ENCODE measurements at regions of chr4 and their contacts with region 1.

Region 1: DNA sequence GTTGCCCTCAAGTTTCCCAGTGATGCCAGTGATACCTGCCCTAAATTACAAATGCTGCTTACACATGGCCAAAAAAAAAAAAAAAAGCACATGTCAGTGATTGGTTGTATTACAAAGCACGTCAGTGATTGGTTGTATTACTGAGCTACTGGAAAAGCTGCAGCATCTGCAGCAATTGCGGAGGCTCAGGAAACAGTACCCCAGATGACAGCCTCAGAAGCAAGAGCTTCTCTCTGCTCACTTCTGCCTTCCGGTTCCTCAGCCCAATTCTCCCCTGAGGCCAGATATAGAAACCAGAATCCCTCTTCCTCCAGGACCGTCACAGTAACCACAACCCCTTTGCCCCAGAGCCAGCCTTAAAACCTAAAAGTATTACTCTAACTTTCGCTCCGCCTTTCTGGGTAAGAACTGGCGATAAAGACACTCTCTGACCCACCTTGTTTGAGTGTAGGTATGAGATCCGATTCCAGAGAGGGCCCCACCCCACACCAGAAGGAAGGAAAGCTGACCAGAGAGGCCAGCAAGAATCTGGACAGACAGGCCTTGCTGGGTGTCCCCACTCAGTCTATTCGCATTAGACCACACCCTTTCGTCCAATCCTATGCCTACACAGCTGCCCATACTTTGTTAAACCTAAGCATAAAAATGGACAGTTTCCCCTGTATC is 85.0 kb upstream of the SORBS2 start:
- DNase-seq: peak; percentile 88 to 96
- H3K4me3 ChIP-seq: peak overlapping the region; percentile 14; the same call in 1 of the 2 replicates
- H3K27ac ChIP-seq: peak overlapping the region; percentile 97
- H3K4me1 ChIP-seq: peaks cover 28% of the 10 kb centered on the region
- H3K27me3 ChIP-seq: no peaks in the 10 kb centered on the region
- CTCF ChIP-seq: no peak

Region 2: GRCh38 chr4:184860018-184860779 is 1036.8 kb before region 1 on chr4:
- CTCF ChIA-PET with region 1: no interaction called
- POLR2A ChIA-PET with region 1: no interaction called
- intact Hi-C with region 1: no loop called
- DNase-seq: no peak
- H3K4me3 ChIP-seq: no peak overlapping the region
- H3K27ac ChIP-seq: no peak overlapping the region
- H3K4me1 ChIP-seq: no peaks in the 10 kb centered on the region
- H3K27me3 ChIP-seq: no peaks in the 10 kb centered on the region
- CTCF ChIP-seq: no peak

Region 3: DNA sequence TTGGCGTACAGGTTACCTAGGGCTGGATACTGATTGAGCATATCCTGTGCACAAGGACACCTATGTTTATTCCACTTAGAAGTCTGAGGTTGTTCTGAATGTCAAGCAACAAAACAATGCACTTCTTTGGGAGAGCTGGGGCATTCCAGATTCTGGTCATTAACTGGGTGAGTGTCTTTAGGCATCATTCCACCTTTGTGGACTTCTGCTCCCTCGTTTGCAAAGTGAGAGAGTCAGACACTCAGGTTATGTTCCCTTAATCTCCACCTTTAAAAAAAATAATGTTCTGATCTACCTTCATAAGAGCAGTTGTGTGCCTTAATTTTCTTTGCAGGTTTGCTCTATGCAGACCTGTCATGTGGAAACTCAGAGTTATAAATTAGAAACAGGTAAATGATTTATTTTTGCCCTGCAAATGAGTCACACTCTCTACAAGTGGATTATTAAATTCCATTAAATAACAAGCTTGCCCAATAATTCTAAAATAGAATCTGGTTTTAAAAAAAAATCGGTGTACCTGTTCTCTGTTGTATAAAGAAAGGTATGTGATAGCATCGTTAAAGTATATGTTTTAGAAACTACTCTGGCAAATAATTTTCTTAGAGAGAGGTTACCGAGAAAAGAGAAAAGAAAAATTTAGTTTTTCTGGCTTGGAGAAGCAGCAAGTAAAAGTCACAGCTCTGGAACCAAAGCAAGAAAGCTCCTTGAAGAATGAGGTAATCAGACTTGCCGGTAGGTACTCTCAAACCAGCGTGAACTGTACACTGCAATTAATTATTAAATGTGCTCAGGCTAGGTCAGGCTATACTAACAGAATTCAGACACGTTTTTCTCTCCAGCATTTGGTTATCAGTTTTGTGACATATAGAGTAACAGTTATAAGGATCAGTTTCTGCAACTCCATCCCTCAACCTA is 178.1 kb before region 1 on chr4:
- CTCF ChIA-PET with region 1: no interaction called
- POLR2A ChIA-PET with region 1: interaction called, 20 read pairs
- intact Hi-C with region 1: no loop called
- DNase-seq: no peak
- H3K4me3 ChIP-seq: no peak overlapping the region
- H3K27ac ChIP-seq: no peak overlapping the region
- H3K4me1 ChIP-seq: no peaks in the 10 kb centered on the region
- H3K27me3 ChIP-seq: no peaks in the 10 kb centered on the region
- CTCF ChIP-seq: no peak

Region 4: GRCh38 chr4:185847352-185848107 is 49.4 kb before region 1 on chr4:
- CTCF ChIA-PET with region 1: no interaction called
- POLR2A ChIA-PET with region 1: interaction called, 4 read pairs
- intact Hi-C with region 1: loop called (anchors 2 kb)
- DNase-seq: peak in 1 of 2 experiments; percentile 60
- H3K4me3 ChIP-seq: no peak overlapping the region
- H3K27ac ChIP-seq: no peak overlapping the region
- H3K4me1 ChIP-seq: no peaks in the 10 kb centered on the region
- H3K27me3 ChIP-seq: no peaks in the 10 kb centered on the region
- CTCF ChIP-seq: no peak

Region 5: DNA sequence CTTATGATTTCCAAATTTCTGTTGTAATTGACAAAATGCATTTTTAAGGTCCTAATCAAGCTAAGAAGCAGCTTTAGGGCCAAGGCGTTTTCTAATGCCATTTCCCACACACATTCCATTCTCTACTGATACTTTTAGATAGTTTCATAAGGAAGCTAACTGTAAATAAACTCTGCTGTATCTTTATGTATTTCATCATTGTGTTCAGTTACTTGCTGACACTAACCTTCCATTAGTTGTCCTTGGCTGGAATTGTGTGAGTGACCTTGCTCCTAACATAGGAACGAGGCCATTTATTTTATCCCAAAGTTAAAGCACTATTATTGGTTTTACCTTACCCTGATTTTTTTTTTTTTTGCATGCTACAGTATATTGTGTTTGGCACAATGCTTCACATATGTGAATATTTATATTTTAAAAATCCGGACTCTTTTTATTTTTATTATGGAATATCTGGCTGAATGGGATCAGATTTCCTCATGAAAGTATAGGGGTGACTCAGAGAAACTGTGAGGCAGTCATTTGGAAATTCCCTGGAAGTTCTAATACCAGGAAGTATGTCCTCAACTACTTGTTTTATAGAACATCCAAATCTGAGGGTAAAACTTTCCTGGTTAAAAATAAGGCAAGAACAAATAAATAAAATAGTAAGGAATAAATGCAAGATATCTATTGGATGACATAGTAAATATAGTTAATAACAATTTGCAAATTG is 22.3 kb before region 1 on chr4:
- CTCF ChIA-PET with region 1: no interaction called
- POLR2A ChIA-PET with region 1: interaction called, 20 read pairs
- intact Hi-C with region 1: no loop called
- DNase-seq: peak in 1 of 2 experiments; percentile 49
- H3K4me3 ChIP-seq: no peak overlapping the region
- H3K27ac ChIP-seq: peak overlapping the region; percentile 65
- H3K4me1 ChIP-seq: peaks cover 11% of the 10 kb centered on the region
- H3K27me3 ChIP-seq: no peaks in the 10 kb centered on the region
- CTCF ChIP-seq: no peak

Region 6: GRCh38 chr4:185914583-185915199 is 17.7 kb after region 1 on chr4:
- CTCF ChIA-PET with region 1: no interaction called
- POLR2A ChIA-PET with region 1: no interaction called
- intact Hi-C with region 1: no loop called
- DNase-seq: no peak
- H3K4me3 ChIP-seq: no peak overlapping the region
- H3K27ac ChIP-seq: no peak overlapping the region
- H3K4me1 ChIP-seq: peaks cover 21% of the 10 kb centered on the region
- H3K27me3 ChIP-seq: no peaks in the 10 kb centered on the region
- CTCF ChIP-seq: no peak

Region 7: DNA sequence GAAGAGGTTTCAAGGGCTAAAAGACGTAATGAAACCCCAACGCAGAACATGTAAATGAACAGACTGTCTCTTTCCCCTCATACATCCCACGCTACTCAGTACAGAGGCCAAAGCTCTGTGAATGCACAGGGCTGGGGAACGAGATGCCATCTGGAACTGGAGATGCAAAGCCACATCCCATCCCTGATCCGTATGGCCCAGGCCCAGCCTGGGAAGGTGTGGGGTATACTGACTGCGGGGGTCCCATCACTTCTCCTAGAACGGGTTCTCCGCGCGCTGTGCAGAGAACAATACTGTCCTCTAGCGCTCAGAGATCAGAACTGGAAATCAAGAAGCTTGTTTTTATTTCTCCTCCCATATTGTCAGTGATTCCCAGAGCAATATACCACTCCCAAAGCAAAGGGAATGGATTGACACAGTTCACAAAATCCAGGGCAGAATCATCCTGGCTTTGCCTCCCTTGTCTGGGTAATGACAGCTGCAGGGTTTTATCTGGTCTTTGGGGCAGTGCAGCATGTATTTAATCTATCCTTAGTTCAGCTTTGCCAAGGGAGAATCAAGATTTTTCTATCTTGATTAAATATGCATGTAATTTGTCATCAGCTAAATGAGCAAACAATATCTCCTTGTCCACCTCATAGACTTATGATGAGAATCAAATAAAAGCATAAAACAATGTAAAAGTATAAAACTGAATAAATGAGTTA is 124.7 kb after region 1 on chr4:
- CTCF ChIA-PET with region 1: interaction called, 9 read pairs
- POLR2A ChIA-PET with region 1: no interaction called
- intact Hi-C with region 1: loop called (anchors 2 kb)
- DNase-seq: peak in 1 of 2 experiments; percentile 25
- H3K4me3 ChIP-seq: no peak overlapping the region
- H3K27ac ChIP-seq: no peak overlapping the region
- H3K4me1 ChIP-seq: no peaks in the 10 kb centered on the region
- H3K27me3 ChIP-seq: no peaks in the 10 kb centered on the region
- CTCF ChIP-seq: peak; percentile 58